PC-3 (cell line): ENCODE measurements at regions of chr7 and their contacts with region 1.

Region 1: DNA sequence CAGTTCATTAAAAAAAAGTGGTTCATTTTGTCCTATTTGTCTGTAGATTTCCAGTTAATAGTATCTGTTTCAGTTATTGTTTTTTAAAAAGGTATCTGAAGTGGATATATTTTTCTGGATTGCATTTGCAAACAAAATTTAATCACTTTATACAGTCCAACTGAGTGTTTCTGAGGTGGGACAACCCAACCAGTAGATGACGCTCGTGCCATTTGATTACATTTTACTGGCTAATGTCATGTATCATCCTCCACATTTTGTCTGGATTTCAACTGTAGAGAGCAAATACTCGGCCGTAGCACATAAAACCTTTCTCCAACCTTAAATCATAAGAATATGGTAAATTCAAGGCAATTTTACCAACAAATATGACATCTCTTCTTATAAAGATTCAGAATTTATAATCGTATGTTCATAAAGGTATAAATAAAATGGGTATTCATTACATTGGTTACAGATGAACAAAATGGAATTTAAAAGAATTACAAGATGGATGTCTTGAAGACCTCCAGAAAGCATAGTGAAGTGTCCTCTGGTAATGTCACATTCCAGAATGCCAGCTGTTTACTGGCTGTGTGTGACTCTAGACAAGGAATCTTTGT is 789.0 kb downstream of the PHTF2 start:
- DNase-seq: peak; percentile 70
- ATAC-seq: peak; percentile 71
- H3K4me3 ChIP-seq: no peak overlapping the region
- H3K27ac ChIP-seq: no peak overlapping the region
- H3K4me1 ChIP-seq: no peaks in the 10 kb centered on the region
- H3K27me3 ChIP-seq: peaks cover 4% of the 10 kb centered on the region; the same call in 1 of the 2 replicates
- CTCF ChIP-seq: peak; percentile 88

Region 2: DNA sequence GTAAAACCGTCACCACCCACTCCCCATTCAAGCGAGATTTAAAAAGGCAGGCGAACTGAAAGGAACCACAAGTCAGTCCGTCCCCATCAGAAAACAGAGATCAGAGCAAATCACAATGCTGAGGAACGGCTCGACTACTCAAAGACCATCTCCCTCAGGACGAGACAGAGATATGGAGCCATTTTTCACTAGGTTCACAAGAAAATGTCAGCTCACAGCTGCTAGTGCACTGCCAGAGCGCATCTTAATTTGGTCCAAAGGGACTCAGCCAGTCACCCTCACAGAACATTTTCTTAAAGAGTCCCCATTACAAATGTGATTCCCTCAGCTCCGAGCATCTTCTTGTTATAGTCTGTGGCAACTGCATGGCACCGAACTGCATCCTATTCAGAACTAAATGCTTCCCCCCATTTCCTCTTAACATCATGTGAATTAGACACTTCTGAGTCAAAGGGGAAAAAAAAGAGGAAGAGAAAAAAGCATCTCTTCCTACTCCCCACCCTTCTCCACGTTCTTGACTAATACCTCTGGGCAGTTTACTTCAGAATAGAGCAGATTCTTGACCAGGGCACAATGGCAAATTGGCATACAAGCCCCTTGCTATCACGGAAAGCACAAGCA is 182.0 kb after region 1 on chr7:
- CTCF ChIA-PET with region 1: no interaction called
- POLR2A ChIA-PET with region 1: no interaction called
- intact Hi-C with region 1: no loop called
- DNase-seq: no peak
- ATAC-seq: no peak
- H3K4me3 ChIP-seq: no peak overlapping the region
- H3K27ac ChIP-seq: no peak overlapping the region
- H3K4me1 ChIP-seq: no peaks in the 10 kb centered on the region
- H3K27me3 ChIP-seq: peaks cover 49% of the 10 kb centered on the region
- CTCF ChIP-seq: no peak

Region 3: GRCh38 chr7:78779788-78780187 is 192.2 kb after region 1 on chr7:
- CTCF ChIA-PET with region 1: no interaction called
- POLR2A ChIA-PET with region 1: no interaction called
- intact Hi-C with region 1: loop called (anchors 1 kb)
- DNase-seq: no peak
- ATAC-seq: no peak
- H3K4me3 ChIP-seq: no peak overlapping the region
- H3K27ac ChIP-seq: no peak overlapping the region
- H3K4me1 ChIP-seq: peaks cover 7% of the 10 kb centered on the region
- H3K27me3 ChIP-seq: peaks cover 11% of the 10 kb centered on the region; the same call in 1 of the 2 replicates
- CTCF ChIP-seq: peak; percentile 44

Region 4: DNA sequence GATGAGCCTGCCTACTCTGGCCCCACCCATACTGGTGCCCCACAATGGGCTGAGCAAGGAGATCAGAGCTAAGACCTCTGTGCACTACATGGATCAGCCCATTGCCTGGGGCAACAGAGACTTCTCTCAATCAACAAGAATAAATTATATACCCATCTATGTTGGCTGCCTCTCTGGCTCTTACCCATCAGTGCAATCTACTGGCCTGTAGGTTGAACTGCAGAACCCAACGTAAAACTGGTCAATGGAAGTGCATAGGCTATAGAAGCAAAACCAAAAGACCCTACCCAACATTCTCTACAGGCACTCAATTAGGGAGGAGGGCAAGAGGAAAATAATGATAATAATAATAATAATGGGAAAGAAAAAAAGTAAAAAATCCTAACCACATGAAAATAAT is 291.7 kb after region 1 on chr7:
- CTCF ChIA-PET with region 1: no interaction called
- POLR2A ChIA-PET with region 1: no interaction called
- intact Hi-C with region 1: no loop called
- DNase-seq: no peak
- ATAC-seq: no peak
- H3K4me3 ChIP-seq: no peak overlapping the region
- H3K27ac ChIP-seq: no peak overlapping the region
- H3K4me1 ChIP-seq: no peaks in the 10 kb centered on the region
- H3K27me3 ChIP-seq: 0 out of 2 replicates have a peak, but pooled peaks cover 4% of the 10 kb centered on the region
- CTCF ChIP-seq: no peak

Region 5: DNA sequence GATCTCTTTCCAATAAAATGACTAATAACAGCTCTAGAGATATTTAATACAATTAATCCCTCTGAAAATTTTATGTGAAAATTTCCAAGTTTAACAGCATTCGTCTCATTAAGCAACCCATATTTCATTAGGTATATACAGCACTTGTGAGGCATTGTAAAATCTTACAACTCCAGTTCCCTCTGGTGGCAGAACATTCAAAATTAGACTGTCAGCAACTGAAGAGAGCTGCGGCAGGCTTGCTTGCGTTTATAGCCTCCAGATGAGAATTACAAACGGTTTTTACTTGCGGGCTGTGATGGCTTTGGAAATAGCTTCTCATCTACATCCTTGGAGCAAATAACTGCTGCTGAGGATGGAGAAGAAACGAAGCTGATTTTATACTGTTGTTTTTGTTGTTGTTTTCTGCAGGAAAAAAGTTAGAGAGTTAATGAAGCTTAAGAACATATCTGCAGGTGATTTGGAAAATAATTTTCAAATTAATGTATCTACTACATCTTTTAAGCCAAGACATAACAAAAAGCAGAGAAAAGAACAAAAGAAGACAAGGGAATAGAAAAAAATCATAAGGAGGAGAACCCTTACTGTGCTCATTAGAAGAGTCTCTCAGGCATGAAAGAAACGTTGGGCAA is 694.6 kb after region 1 on chr7:
- CTCF ChIA-PET with region 1: no interaction called
- POLR2A ChIA-PET with region 1: no interaction called
- intact Hi-C with region 1: loop called (anchors 1 kb)
- DNase-seq: peak; percentile 71
- ATAC-seq: peak; percentile 70
- H3K4me3 ChIP-seq: peak overlapping the region; percentile 10
- H3K27ac ChIP-seq: peak overlapping the region; percentile 67
- H3K4me1 ChIP-seq: peaks cover 45% of the 10 kb centered on the region
- H3K27me3 ChIP-seq: no peaks in the 10 kb centered on the region
- CTCF ChIP-seq: peak; percentile 62